ENCODE measurements at regions of chr10 and their contacts with region 1.

Region 1: GRCh38 chr10:98467506-98468346 is 21.0 kb upstream of the HPS1 start:
- DNase-seq: peak; percentile 76 to 96
- H3K4me3 ChIP-seq: peak overlapping the region; percentile 51 to 68 (median 60)
- H3K27ac ChIP-seq: peak overlapping the region in 2 of 5 donors; percentile 35 to 56
- H3K4me1 ChIP-seq: peaks cover 5 to 16% (median 7%) of the 10 kb centered on the region in 4 donors
- H3K27me3 ChIP-seq: peaks cover 0 to 4% (median 0%) of the 10 kb centered on the region in 3 donors
- CTCF ChIP-seq: peak in 5 of 7 experiments; percentile 52 to 85 (median 79)
- EP300 ChIP-seq: no peak
- POLR2A ChIP-seq: no peak

Region 2: GRCh38 chr10:99172130-99172738 is 704.5 kb after region 1 on chr10:
- intact Hi-C with region 1: loop called (anchors 10 kb)
- DNase-seq: peak in 1 of 2 donors; percentile 74
- H3K4me3 ChIP-seq: no peak overlapping the region
- H3K27ac ChIP-seq: no peak overlapping the region
- H3K4me1 ChIP-seq: no peaks in the 10 kb centered on the region
- H3K27me3 ChIP-seq: peaks cover 0 to 15% (median 9%) of the 10 kb centered on the region in 3 donors
- CTCF ChIP-seq: peak in 3 of 7 experiments; percentile 30 to 37 (median 33)
- EP300 ChIP-seq: no peak
- POLR2A ChIP-seq: no peak

Region 3: GRCh38 chr10:99248824-99249223 is 781.1 kb after region 1 on chr10:
- intact Hi-C with region 1: loop called (anchors 5 kb)
- DNase-seq: no peak
- H3K4me3 ChIP-seq: no peak overlapping the region
- H3K27ac ChIP-seq: no peak overlapping the region
- H3K4me1 ChIP-seq: no peaks in the 10 kb centered on the region
- H3K27me3 ChIP-seq: peaks cover 0 to 7% (median 0%) of the 10 kb centered on the region in 3 donors
- CTCF ChIP-seq: no peak
- EP300 ChIP-seq: no peak
- POLR2A ChIP-seq: no peak